Naive thymus-derived CD4-positive, alpha-beta T cell (primary cell): ENCODE measurements at regions of chr2 and their contacts with region 1.

Region 1: DNA sequence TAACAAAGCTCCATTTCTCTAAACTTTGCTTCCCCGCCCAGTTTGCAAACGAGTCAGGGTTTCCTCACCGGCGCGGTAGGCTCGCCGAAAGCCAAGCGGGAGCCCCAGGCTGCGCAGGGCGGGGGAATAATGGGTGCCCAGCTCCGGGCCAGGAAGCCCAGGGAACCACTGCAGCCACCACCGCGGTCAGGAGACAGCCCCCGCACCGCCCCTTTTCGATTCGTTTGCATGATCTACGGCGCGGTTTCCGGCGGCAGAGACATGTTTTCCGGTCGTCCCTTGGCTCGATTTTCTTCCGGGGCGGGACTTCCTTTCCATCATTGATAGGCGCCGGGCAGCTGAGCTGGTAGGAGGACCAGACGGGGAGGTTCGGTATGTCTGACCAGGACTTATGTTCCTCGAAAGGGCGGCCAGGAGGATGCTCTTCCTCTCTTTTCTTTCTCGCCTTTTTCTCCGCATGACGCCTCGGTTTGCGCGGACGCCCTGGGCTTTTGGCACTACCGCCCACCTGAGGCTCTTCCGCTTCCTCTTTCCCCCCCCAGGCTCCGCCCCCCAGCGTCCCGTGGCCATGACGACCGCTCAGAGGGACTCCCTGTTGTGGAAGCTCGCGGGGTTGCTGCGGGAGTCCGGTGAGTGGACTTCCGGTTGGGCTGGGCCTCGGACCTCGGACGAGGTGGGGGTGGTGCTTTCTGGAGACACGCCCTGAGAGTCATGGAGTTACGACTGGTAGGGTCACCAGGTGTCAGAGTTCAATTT is at the start of gene STK11IP:
- DNase-seq: peak; percentile 76 to 91 (median 87)
- ATAC-seq: peak; percentile 91
- H3K4me3 ChIP-seq: peak within 1 kb of the TSS; percentile 86
- H3K4me3 Mint-ChIP-seq: peak within 1 kb of the TSS; percentile 89 to 99 (median 96)
- H3K27ac ChIP-seq: peak within 1 kb of the TSS; percentile 80
- H3K27ac Mint-ChIP-seq: peak within 1 kb of the TSS; percentile 93 to 98 (median 94)
- H3K4me1 ChIP-seq: peaks cover 5 to 15% of the 10 kb centered on the region in 2 donors
- H3K4me1 Mint-ChIP-seq: peaks cover 14 to 30% (median 21%) of the 10 kb centered on the region in 7 donors
- H3K27me3 ChIP-seq: no peaks in the 10 kb centered on the region
- H3K27me3 Mint-ChIP-seq: peaks cover 3 to 10% (median 6%) of the 10 kb centered on the region in 5 donors
- total RNA-seq, gene STK11IP: 33.6 to 46.4 (median 42.6) TPM

Region 2: GRCh38 chr2:218671654-218672566 is 925.8 kb before region 1 on chr2 and contains the starts of genes RNF25 and STK36:
- CTCF ChIA-PET with region 1: no interaction called
- POLR2A ChIA-PET with region 1: no interaction called
- intact Hi-C with region 1: loop called in 1 of 2 experiments (anchors 5 kb)
- DNase-seq: peak; percentile 60 to 86 (median 79)
- ATAC-seq: peak; percentile 96
- H3K4me3 ChIP-seq: peak within 1 kb of the TSS; percentile 81
- H3K4me3 Mint-ChIP-seq: peak within 1 kb of the TSS; percentile 88 to 100 (median 98)
- H3K27ac ChIP-seq: peak within 1 kb of the TSS; percentile 84
- H3K27ac Mint-ChIP-seq: peak within 1 kb of the TSS; percentile 90 to 98 (median 96)
- H3K4me1 ChIP-seq: peaks cover 9 to 15% of the 10 kb centered on the region in 2 donors
- H3K4me1 Mint-ChIP-seq: peaks cover 14 to 29% (median 24%) of the 10 kb centered on the region in 7 donors
- H3K27me3 ChIP-seq: no peaks in the 10 kb centered on the region
- H3K27me3 Mint-ChIP-seq: no peaks in the 10 kb centered on the region
- total RNA-seq, gene RNF25: 12.6 to 33.4 (median 28.3) TPM
- total RNA-seq, gene STK36: 18.9 to 28.1 (median 19.7) TPM

Region 3: GRCh38 chr2:218876562-218877219 is 721.0 kb before region 1 on chr2:
- CTCF ChIA-PET with region 1: no interaction called
- POLR2A ChIA-PET with region 1: no interaction called
- intact Hi-C with region 1: loop called in 1 of 2 experiments (anchors 5 kb)
- DNase-seq: peak in 8 of 9 donors; percentile 53 to 85 (median 74)
- ATAC-seq: peak; percentile 24
- H3K4me3 ChIP-seq: no peak overlapping the region
- H3K4me3 Mint-ChIP-seq: peak overlapping the region in 3 of 10 donors; percentile 1 to 19 (median 3)
- H3K27ac ChIP-seq: no peak overlapping the region
- H3K27ac Mint-ChIP-seq: peak overlapping the region in 3 of 9 donors; percentile 48 to 53 (median 52)
- H3K4me1 ChIP-seq: peaks cover 26 to 42% of the 10 kb centered on the region in 2 donors
- H3K4me1 Mint-ChIP-seq: peaks cover 24 to 53% (median 43%) of the 10 kb centered on the region in 7 donors
- H3K27me3 ChIP-seq: peaks cover 8 to 18% of the 10 kb centered on the region in 2 donors
- H3K27me3 Mint-ChIP-seq: peaks cover 18 to 77% (median 29%) of the 10 kb centered on the region in 5 donors

Region 4: GRCh38 chr2:219245148-219245898 is 352.4 kb before region 1 on chr2 and contains the starts of genes GLB1L and STK16:
- CTCF ChIA-PET with region 1: no interaction called
- POLR2A ChIA-PET with region 1: no interaction called
- intact Hi-C with region 1: loop called (anchors 5 kb)
- DNase-seq: peak; percentile 76 to 95 (median 85)
- ATAC-seq: peak; percentile 80
- H3K4me3 ChIP-seq: peak within 1 kb of the TSS; percentile 92
- H3K4me3 Mint-ChIP-seq: peak within 1 kb of the TSS; percentile 82 to 100 (median 93)
- H3K27ac ChIP-seq: peak within 1 kb of the TSS; percentile 89
- H3K27ac Mint-ChIP-seq: peak within 1 kb of the TSS; percentile 88 to 99 (median 97)
- H3K4me1 ChIP-seq: peaks cover 52 to 53% of the 10 kb centered on the region in 2 donors
- H3K4me1 Mint-ChIP-seq: peaks cover 26 to 73% (median 59%) of the 10 kb centered on the region in 7 donors
- H3K27me3 ChIP-seq: no peaks in the 10 kb centered on the region
- H3K27me3 Mint-ChIP-seq: peaks cover 0 to 2% (median 0%) of the 10 kb centered on the region in 5 donors
- total RNA-seq, gene GLB1L: 1.9 to 4.5 (median 2.7) TPM
- total RNA-seq, gene STK16: 17.4 to 35.0 (median 21.8) TPM

Region 5: DNA sequence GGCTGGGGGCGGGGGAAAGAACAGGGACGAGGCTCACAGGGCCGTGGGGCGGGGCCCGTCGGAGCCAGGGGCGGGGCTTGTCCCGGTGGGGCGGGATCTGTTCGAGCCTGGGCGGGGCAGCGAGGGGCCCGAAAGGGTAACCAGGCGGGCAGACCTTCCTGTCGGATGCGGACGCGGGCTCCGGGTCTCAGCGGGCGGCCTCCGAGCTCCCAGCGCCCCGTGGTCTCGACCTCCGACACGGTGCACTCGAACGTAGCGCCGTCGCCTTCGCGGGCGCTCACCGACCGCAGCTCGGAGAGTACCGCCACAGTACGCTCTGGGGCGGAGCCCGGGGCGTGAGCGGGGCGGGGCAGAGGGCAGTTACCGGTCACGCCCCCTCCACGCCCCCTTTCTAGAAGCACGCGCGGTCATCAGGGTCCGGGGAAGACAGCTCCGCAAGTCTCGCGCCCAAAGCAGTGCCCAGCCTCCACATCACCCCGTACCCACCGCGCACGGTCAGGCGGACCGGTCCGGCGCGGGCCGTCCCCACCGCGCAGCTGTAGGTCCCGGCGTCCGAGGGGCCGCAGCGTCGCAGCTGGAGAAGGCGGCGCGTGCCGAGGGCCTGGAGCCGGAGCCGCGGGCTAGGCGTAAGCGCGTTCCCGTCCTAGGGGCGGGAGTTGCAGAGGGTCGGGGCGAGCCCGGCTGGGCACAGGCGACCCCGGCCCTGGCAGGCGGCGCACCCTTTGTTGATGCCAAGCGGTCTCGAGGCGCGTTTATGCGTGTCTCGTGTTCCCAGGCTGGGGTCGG is 45.2 kb before region 1 on chr2:
- CTCF ChIA-PET with region 1: no interaction called
- POLR2A ChIA-PET with region 1: interaction called, 3 read pairs
- intact Hi-C with region 1: loop called (anchors 1 to 2 kb)
- DNase-seq: peak; percentile 62 to 89 (median 73)
- ATAC-seq: peak; percentile 94
- H3K4me3 ChIP-seq: peak overlapping the region; percentile 57
- H3K4me3 Mint-ChIP-seq: peak overlapping the region; percentile 60 to 85 (median 78)
- H3K27ac ChIP-seq: no peak overlapping the region
- H3K27ac Mint-ChIP-seq: peak overlapping the region in 3 of 9 donors; percentile 14 to 59 (median 48)
- H3K4me1 ChIP-seq: peaks cover 5 to 13% of the 10 kb centered on the region in 2 donors
- H3K4me1 Mint-ChIP-seq: peaks cover 5 to 20% (median 8%) of the 10 kb centered on the region in 7 donors
- H3K27me3 ChIP-seq: peaks cover 3 to 17% of the 10 kb centered on the region in 2 donors
- H3K27me3 Mint-ChIP-seq: peaks cover 0 to 48% (median 33%) of the 10 kb centered on the region in 5 donors

Region 6: DNA sequence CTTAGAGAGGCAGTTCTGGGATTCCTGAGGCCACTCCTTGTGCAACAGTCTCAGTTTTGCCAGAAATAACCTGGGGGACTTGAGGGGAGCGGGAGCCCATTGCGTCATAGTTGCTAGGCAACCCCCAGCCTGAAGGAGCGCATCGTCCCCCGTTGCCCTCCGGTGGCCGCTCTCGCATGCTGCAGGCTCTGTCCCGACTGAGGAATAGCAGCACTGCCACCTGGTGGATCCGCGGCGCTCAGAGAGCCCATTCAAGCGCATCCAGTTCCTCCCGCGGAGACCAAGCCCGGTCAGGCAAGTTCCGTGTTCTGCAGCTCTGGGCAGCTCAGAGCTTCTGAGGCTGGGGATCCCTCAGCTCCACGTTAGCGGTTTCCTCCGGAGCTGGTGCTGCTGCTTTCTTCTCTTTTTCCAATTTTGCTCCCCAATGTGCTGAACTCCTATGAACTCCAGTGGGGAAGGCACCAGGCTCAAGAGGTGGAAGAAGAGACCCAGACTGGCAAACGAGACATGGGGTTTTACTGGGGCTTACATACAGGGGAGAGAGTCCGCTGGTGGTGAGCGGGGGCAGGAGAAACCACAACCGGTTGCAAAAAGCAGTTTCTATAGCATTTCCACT is 44.8 kb after region 1 on chr2:
- CTCF ChIA-PET with region 1: interaction called, 4 read pairs
- POLR2A ChIA-PET with region 1: no interaction called
- intact Hi-C with region 1: loop called (anchors 1 kb)
- DNase-seq: peak; percentile 73 to 88 (median 83)
- ATAC-seq: peak; percentile 99
- H3K4me3 ChIP-seq: no peak overlapping the region
- H3K4me3 Mint-ChIP-seq: peak overlapping the region in 1 of 10 donors; percentile 29
- H3K27ac ChIP-seq: no peak overlapping the region
- H3K27ac Mint-ChIP-seq: peak overlapping the region in 3 of 9 donors; percentile 16 to 69 (median 20)
- H3K4me1 ChIP-seq: peaks cover 3 to 4% of the 10 kb centered on the region in 2 donors
- H3K4me1 Mint-ChIP-seq: peaks cover 0 to 15% (median 0%) of the 10 kb centered on the region in 7 donors
- H3K27me3 ChIP-seq: no peaks in the 10 kb centered on the region
- H3K27me3 Mint-ChIP-seq: peaks cover 3 to 29% (median 12%) of the 10 kb centered on the region in 5 donors

Region 7: GRCh38 chr2:219689676-219690628 is 92.2 kb after region 1 on chr2:
- CTCF ChIA-PET with region 1: no interaction called
- POLR2A ChIA-PET with region 1: no interaction called
- intact Hi-C with region 1: loop called in 1 of 2 experiments (anchors 2 kb)
- DNase-seq: peak in 8 of 9 donors; percentile 11 to 50 (median 38)
- ATAC-seq: peak; percentile 67
- H3K4me3 ChIP-seq: no peak overlapping the region
- H3K4me3 Mint-ChIP-seq: no peak overlapping the region
- H3K27ac ChIP-seq: no peak overlapping the region
- H3K27ac Mint-ChIP-seq: no peak overlapping the region
- H3K4me1 ChIP-seq: no peaks in the 10 kb centered on the region
- H3K4me1 Mint-ChIP-seq: peaks cover 5 to 14% (median 11%) of the 10 kb centered on the region in 7 donors
- H3K27me3 ChIP-seq: no peaks in the 10 kb centered on the region
- H3K27me3 Mint-ChIP-seq: peaks cover 17 to 46% (median 25%) of the 10 kb centered on the region in 5 donors

Region 8: GRCh38 chr2:219886615-219887014 is 288.9 kb after region 1 on chr2:
- CTCF ChIA-PET with region 1: no interaction called
- POLR2A ChIA-PET with region 1: no interaction called
- intact Hi-C with region 1: no loop called
- DNase-seq: no peak
- ATAC-seq: no peak
- H3K4me3 ChIP-seq: no peak overlapping the region
- H3K4me3 Mint-ChIP-seq: no peak overlapping the region
- H3K27ac ChIP-seq: no peak overlapping the region
- H3K27ac Mint-ChIP-seq: no peak overlapping the region
- H3K4me1 ChIP-seq: no peaks in the 10 kb centered on the region
- H3K4me1 Mint-ChIP-seq: no peaks in the 10 kb centered on the region
- H3K27me3 ChIP-seq: no peaks in the 10 kb centered on the region
- H3K27me3 Mint-ChIP-seq: peaks cover 0 to 32% (median 23%) of the 10 kb centered on the region in 5 donors